ENCODE measurements at regions of chr14 and their contacts with region 1.

Region 1: GRCh38 chr14:100654814-100655740 is 67.9 kb upstream of the BEGAIN start:
- DNase-seq: no peak
- H3K4me3 ChIP-seq: no peak overlapping the region
- CTCF ChIP-seq: peak; percentile 61

Region 2: DNA sequence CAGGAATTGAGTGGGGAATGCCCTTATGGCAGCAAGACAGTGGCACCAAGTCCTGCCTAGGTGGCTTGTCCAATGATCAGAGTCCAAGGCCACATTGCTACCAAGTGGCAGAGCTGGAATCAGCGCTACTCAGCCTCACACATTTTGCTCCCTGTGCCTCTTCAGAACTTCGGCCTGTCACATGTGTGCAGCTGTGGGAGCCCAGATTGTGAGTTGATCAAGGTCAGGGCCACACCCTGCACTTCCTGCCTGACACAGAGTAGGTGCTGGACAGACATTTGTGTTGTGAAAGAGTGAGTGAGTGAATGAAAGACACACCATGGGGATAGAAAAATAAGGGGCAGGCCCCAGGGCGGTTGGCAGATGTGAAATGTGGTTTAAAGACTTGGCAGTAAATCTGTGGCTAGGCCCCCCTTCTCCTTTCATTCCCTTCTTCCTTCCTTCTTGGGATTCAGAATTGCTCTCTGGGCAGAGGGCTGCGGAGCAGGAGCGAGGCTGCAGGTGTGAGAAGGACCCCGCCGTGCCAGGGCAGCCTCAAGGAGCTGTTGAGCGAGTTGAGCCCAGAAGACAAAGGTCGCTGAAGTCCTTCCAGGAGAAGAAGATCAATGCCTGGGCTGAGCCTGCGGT is 248.5 kb before region 1 on chr14:
- in situ Hi-C with region 1: loop called (anchors 10 kb)
- DNase-seq: no peak
- H3K4me3 ChIP-seq: no peak overlapping the region
- CTCF ChIP-seq: no peak

Region 3: GRCh38 chr14:100471441-100472093 is 183.5 kb before region 1 on chr14:
- in situ Hi-C with region 1: no loop called
- DNase-seq: no peak
- H3K4me3 ChIP-seq: no peak overlapping the region
- CTCF ChIP-seq: no peak

Measured in astrocyte of the cerebellum (primary cell).